ENCODE measurements at regions of chr15 and their contacts with region 1.

Region 1: GRCh38 chr15:99507504-99508310 is 58.1 kb upstream of the MEF2A start:
- DNase-seq: peak; percentile 21
- ATAC-seq: peak; percentile 84
- H3K4me3 ChIP-seq: peak overlapping the region; percentile 6 to 50 (median 23); a peak in 3 of 6 replicates
- H3K27ac ChIP-seq: no peak overlapping the region
- H3K4me1 ChIP-seq: peaks cover 42% of the 10 kb centered on the region
- H3K27me3 ChIP-seq: peaks cover 2 to 13% of the 10 kb centered on the region in 2 experiments; a peak in 2 of 5 replicates
- CTCF ChIP-seq: no peak
- EP300 ChIP-seq: no peak
- POLR2A ChIP-seq: no peak
- RAD21 ChIP-seq: no peak

Region 2: DNA sequence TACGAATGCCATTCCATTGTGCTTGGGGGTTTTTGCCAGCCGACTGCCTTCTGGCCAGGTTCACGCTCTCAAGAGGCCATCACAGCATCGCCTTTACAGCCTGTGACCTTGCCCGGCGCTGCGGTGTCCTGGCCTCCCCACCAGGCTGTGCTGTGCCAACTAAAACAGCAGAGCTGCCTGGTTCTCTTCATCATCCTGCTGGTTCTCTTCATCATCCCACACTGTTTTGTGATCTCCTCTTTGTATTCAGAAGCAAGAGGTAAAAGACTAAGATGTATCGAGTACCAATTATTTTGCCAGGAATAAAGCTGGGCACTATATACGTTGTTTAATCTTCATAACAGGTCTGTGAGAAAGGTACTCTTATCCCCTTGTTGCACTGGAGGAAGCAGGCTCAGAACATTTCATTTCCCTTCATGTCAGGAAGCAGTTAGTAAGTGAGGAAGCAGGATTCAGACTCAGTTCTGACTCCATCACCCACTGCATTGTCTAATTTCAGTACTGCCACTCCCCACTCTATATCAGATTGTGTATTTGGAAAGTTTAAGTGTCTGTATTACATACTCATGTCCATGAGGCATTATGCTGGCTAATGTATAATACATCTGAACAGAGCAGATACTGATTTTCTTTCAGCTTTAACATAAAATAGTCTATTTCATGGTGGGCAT is 163.7 kb before region 1 on chr15:
- CTCF ChIA-PET with region 1: no interaction called
- POLR2A ChIA-PET with region 1: no interaction called
- in situ Hi-C with region 1: no loop called
- intact Hi-C with region 1: no loop called
- DNase-seq: no peak
- ATAC-seq: peak; percentile 63
- H3K4me3 ChIP-seq: no peak overlapping the region
- H3K27ac ChIP-seq: peak overlapping the region; percentile 15
- H3K4me1 ChIP-seq: peaks cover 48% of the 10 kb centered on the region
- H3K27me3 ChIP-seq: no peaks in the 10 kb centered on the region
- CTCF ChIP-seq: peak; percentile 61
- EP300 ChIP-seq: no peak
- POLR2A ChIP-seq: no peak
- RAD21 ChIP-seq: no peak

Region 3: DNA sequence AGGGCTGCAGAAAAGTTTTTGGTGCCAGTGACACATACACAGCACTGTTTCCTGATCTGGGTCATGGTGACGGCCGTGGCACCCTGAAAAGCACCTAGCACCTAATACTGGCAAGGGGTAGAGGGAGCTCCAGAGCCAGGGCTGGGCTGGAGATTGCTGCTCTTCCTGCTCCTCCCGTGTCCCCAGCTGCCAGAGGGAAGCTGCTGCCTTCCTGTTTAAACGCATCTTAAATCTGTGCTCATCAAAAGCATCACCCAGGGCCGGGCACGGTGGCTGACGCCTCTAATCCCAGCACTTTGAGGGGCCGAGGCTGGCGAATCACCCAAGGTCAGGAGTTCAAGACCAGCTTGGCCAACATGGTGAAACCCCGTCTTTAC is 98.6 kb before region 1 on chr15:
- CTCF ChIA-PET with region 1: no interaction called
- POLR2A ChIA-PET with region 1: no interaction called
- in situ Hi-C with region 1: no loop called
- intact Hi-C with region 1: loop called (anchors 10 kb)
- DNase-seq: peak; percentile 66
- ATAC-seq: peak; percentile 94
- H3K4me3 ChIP-seq: peak overlapping the region in 1 of 3 experiments; percentile 40; a peak in 1 of 6 replicates
- H3K27ac ChIP-seq: no peak overlapping the region
- H3K4me1 ChIP-seq: peaks cover 40% of the 10 kb centered on the region
- H3K27me3 ChIP-seq: no peaks in the 10 kb centered on the region; a peak in 1 of 5 replicates
- CTCF ChIP-seq: peak; percentile 91
- EP300 ChIP-seq: no peak
- POLR2A ChIP-seq: no peak
- RAD21 ChIP-seq: peak; percentile 85

Region 4: DNA sequence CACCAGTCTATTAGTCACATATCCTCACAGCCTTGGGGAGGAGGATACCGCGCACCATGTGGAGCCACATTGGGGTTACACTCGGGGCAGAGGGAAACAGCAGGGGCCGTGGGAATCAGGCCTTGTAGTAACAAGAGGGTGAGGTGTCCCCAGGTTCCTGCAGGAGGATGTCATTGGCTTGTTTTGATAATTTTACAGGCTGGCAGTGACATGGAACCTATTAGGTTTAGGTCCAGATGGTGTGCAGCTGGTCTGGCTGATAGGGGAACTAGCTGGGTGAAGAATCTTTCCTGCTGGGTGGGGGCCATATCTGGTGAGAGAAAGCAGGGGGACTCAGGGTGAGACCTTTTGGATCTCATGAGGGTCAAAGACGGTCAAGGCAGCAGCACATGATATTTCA is 48.3 kb after region 1 on chr15:
- CTCF ChIA-PET with region 1: no interaction called
- POLR2A ChIA-PET with region 1: no interaction called
- in situ Hi-C with region 1: no loop called
- intact Hi-C with region 1: no loop called
- DNase-seq: no peak
- ATAC-seq: no peak
- H3K4me3 ChIP-seq: no peak overlapping the region
- H3K27ac ChIP-seq: no peak overlapping the region
- H3K4me1 ChIP-seq: no peaks in the 10 kb centered on the region; the same call in 1 of the 2 replicates
- H3K27me3 ChIP-seq: peaks cover 0 to 5% of the 10 kb centered on the region in 2 experiments; a peak in 2 of 5 replicates
- CTCF ChIP-seq: no peak
- EP300 ChIP-seq: no peak
- POLR2A ChIP-seq: no peak
- RAD21 ChIP-seq: no peak

Measured in HepG2 (cell line).